ENCODE measurements at regions of chr3 and their contacts with region 1.

Region 1: GRCh38 chr3:185572183-185572582 is 13.9 kb upstream of the SENP2 start:
- DNase-seq: no peak
- H3K4me3 ChIP-seq: no peak overlapping the region
- H3K27me3 ChIP-seq: no peaks in the 10 kb centered on the region
- CTCF ChIP-seq: no peak

Region 2: DNA sequence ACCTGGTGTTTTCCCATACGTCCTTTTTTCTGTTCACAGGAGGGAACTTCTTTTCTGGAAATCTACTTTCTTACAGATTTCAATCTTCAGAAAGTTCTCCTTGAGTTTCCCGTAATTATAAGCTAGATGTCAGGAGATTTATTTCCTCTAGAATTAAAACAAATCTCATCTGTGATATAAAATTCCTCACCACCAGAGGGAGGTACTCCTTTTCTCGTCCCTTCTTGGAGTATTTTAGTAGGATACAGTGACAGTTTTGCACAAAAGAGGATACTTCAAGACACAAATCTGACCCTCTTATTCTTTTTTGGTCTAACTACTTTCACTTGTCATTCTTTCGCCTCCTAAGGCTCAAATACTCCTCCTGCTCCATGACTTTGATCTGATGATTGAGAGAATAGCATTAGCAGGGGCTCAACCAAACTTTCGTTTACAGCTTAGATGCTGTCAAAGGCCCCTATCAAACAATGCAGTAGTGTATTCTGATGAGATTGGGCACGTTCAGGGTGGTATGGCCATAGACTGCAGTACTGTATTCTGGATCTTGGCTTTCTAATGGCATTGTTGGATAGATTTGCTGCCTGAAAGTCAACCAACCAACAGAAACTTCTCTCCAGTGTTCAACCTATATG is 111.3 kb before region 1 on chr3:
- CTCF ChIA-PET with region 1: interaction called, 23 read pairs
- POLR2A ChIA-PET with region 1: no interaction called
- DNase-seq: no peak
- H3K4me3 ChIP-seq: no peak overlapping the region
- H3K27me3 ChIP-seq: no peaks in the 10 kb centered on the region
- CTCF ChIP-seq: 0 out of 2 replicates have a peak, but pooled peaks have one; percentile 15

Region 3: DNA sequence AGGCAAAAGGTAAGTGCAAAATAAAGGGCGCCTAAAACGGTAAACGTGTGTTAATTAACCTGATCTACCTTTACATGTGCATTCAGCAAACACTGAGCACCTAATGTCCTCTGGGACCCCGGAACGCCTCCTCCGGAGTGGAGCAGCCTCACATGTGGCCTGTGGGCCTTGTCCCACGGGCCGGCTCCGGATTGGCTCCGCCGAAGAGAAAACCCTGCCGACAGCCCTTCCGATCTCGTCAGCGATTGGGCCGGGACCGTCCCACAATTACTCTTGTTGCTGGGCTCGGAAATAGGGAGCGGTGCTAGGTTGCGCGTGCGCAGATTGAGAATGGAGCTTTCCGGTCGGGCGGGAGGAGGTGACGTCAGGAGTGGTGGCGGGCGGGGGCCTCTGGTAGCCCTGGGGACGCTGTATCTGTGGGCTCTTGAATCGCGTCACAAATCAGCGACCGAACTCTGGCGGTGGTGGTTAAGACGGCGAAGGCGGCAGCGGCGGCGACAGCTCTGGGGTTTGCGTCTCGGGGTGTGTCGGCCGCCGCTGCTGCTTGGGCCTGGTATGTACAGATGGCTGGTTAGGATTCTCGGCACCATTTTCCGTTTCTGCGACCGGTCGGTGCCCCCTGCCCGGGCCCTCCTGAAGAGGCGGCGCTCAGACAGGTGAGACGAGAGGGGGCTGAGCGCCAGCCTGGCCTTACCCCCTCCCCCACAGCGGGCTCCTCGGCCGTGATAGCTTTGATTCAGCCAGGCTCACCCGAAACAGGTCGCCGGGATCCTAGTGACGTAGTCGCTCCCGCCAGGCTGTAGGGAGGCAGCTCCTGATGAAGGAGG is 13.9 kb after region 1 on chr3 and contains the start of gene SENP2:
- CTCF ChIA-PET with region 1: interaction called, 19 read pairs
- POLR2A ChIA-PET with region 1: no interaction called
- DNase-seq: peak; percentile 95
- H3K4me3 ChIP-seq: peak within 1 kb of the TSS; percentile 88
- H3K27me3 ChIP-seq: no peaks in the 10 kb centered on the region
- CTCF ChIP-seq: no peak
- polyA plus RNA-seq, gene SENP2: 9.9 and 16.9 TPM in 2 replicates